Esophagus muscularis mucosa (tissue), 4 donors: ENCODE measurements at regions of chr1 and their contacts with region 1.

Region 1: DNA sequence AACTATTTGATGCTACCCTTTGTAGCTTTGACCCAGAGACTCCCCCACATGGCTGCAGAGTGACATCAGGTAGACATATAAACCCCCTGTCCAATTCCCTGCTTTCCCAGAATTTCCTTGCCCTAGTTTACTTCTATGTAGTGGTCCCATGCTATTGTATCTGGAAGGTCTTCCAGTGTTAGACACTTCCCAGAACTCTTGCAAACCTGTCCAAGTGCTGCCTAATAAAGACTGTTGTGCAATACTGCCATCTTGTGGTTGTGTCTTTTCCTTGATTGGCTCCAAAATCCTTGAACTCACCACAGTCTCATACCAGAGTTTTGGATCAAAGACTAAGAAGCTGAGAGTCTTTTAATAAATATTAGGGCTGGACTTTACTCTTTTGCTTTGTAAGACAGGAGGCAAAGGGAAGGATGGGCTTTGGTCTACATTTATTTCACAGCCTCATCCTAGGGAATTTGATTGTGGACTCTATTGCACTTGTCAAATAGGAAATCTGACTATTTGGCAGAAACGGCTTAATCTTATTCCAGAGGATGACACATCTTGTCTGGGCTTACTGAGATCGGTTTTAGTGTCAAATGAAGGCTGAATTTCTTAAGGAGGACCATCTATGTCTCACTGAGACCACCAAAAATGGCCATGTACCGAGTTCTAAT is 169.9 kb downstream of the LRRC7 start:
- DNase-seq: no peak
- H3K4me3 ChIP-seq: no peak overlapping the region
- H3K27ac ChIP-seq: no peak overlapping the region
- H3K4me1 ChIP-seq: no peaks in the 10 kb centered on the region
- H3K27me3 ChIP-seq: no peaks in the 10 kb centered on the region
- CTCF ChIP-seq: peak; percentile 46 to 56 (median 47)
- EP300 ChIP-seq: no peak
- POLR2A ChIP-seq: no peak

Region 2: DNA sequence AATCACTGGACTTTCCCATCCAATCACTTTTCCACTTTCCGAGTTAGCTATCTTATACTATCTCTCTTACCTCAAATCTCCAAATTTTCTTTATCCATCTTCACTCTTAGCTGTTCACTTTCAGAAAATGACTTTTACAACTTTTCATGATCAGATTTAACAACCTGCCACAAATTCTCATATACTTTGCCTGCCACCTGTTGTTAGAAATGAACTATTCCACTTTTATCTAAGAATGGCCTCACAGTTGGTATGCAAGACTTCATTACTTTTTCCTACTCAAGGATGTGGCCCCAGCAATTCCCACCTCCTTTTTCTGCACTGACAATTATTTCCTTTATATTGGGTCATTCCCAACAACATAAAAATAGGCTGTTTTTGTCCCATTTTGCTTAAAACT is 1147.2 kb before region 1 on chr1:
- intact Hi-C with region 1: loop called (anchors 10 kb)
- DNase-seq: no peak
- H3K4me3 ChIP-seq: no peak overlapping the region
- H3K27ac ChIP-seq: no peak overlapping the region
- H3K4me1 ChIP-seq: no peaks in the 10 kb centered on the region
- H3K27me3 ChIP-seq: no peaks in the 10 kb centered on the region
- CTCF ChIP-seq: no peak
- EP300 ChIP-seq: no peak
- POLR2A ChIP-seq: no peak

Region 3: GRCh38 chr1:69567652-69568420 is 169.8 kb before region 1 on chr1 and contains the start of gene LRRC7:
- intact Hi-C with region 1: no loop called
- DNase-seq: no peak
- H3K4me3 ChIP-seq: peak within 1 kb of the TSS; percentile 57 to 61 (median 60)
- H3K27ac ChIP-seq: peak within 1 kb of the TSS in 3 of 4 donors; percentile 26 to 39 (median 34)
- H3K4me1 ChIP-seq: peaks cover 11 to 41% (median 37%) of the 10 kb centered on the region in 4 donors
- H3K27me3 ChIP-seq: peaks cover 0 to 37% (median 7%) of the 10 kb centered on the region in 4 donors
- CTCF ChIP-seq: no peak
- EP300 ChIP-seq: no peak
- POLR2A ChIP-seq: no peak
- total RNA-seq, gene LRRC7: 0.26 to 2.5 (median 0.42) TPM

Region 4: GRCh38 chr1:69765941-69766340 is 28.3 kb after region 1 on chr1:
- intact Hi-C with region 1: no loop called
- DNase-seq: no peak
- H3K4me3 ChIP-seq: no peak overlapping the region
- H3K27ac ChIP-seq: no peak overlapping the region
- H3K4me1 ChIP-seq: no peaks in the 10 kb centered on the region
- H3K27me3 ChIP-seq: no peaks in the 10 kb centered on the region
- CTCF ChIP-seq: no peak
- EP300 ChIP-seq: no peak
- POLR2A ChIP-seq: no peak